Dendritic cell treated with granulocyte-macrophage colony-stimulating factor and Interleukin-4, amounts not matched to agents 40 ng/mL and 50 ng/mL, for 4 days (primary cell): ENCODE measurements at regions of chr17 and their contacts with region 1.

Region 1: DNA sequence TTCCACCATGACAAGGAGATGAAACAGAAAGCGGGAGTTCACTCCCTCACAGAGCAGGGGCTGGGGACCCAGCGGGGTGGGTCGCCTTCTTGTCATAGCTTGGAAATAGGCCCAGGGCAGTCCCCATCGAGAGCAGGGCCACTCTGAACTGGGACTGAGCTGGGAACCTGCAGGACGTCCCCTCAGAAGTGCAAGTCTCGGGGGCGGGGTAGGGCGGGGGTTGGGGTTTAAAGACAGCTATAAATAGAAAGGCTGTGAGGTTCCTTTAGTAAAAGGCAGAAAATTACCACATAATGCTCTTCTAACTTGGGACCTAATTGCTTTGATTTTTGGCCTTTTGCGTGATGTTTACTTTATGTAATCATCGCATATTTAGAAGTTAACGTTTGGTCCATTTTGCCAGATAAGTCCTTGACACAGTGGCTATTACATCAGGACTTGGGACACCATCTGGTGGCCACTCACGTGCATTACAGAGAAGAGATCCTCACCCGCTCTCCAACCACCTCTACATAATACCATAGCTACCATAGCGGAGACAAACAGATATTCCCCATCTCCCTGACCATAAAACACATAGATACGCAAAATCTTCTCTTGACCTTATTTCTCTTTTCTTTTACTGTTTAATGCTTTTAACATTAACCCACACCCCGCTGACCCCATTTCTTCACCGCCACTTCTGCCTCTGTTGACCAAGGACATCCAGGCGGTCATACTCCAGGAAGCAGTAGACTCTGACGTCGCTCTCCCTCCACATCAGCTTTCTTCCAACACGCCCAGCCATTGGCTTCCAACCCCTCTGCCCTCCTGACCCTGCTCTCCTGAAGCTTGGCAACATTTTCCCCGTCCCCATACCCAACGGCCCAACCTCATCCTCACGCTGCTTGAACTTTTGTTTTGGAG is 27.5 kb upstream of the PIK3R6 start:
- H3K4me3 Mint-ChIP-seq: no peak overlapping the region
- H3K27ac Mint-ChIP-seq: peak overlapping the region; percentile 63
- H3K4me1 Mint-ChIP-seq: peaks cover 78% of the 10 kb centered on the region
- H3K27me3 Mint-ChIP-seq: no peaks in the 10 kb centered on the region

Region 2: DNA sequence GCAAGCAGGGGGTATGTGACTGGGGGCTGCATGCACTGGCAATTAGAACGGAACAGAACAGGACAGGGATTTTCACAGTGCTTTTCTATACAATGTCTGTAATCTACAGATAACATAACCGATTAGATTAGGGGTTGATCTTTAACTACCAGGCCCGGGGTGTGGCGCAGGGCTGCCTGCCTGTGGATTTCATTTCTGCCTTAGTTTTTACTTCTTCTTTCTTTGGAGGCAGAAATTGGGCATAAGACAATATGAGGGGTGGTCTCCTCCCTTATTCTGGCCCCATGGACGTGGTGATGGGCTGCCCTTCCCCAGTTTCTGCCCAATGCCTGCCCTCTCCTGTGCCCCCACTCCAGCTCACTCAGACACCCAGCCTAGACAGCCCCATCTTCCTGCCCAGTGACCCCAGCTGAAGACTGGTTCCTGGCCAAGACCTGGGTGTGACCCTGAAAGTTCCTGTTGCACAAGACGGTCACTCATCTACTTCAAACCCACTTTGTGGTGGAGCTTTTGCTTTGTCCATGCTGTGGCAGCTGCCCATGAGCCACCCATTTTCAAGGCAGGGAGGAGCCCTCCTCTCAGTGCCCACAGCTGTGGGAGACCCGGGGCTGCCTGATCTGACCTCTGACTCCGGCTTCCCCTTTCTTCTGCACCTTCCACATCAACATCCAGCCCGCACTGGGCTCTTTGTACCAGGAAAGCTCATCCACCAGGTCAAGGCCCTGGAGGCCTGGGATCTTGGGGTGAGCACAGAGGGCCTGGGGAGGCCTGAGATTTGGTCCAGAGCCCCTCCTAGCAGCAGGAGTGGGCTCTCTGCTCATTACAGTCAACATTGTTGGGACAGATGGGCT is 826.0 kb before region 1 on chr17:
- intact Hi-C with region 1: no loop called
- H3K4me3 Mint-ChIP-seq: peak overlapping the region; percentile 21
- H3K27ac Mint-ChIP-seq: peak overlapping the region; percentile 91
- H3K4me1 Mint-ChIP-seq: peaks cover 75% of the 10 kb centered on the region
- H3K27me3 Mint-ChIP-seq: peaks cover 37% of the 10 kb centered on the region

Region 3: GRCh38 chr17:8806926-8807550 is 87.9 kb before region 1 on chr17:
- intact Hi-C with region 1: loop called (anchors 10 kb)
- H3K4me3 Mint-ChIP-seq: peak overlapping the region; percentile 52
- H3K27ac Mint-ChIP-seq: peak overlapping the region; percentile 93
- H3K4me1 Mint-ChIP-seq: peaks cover 34% of the 10 kb centered on the region
- H3K27me3 Mint-ChIP-seq: no peaks in the 10 kb centered on the region

Region 4: GRCh38 chr17:8846768-8847211 is 48.1 kb before region 1 on chr17:
- intact Hi-C with region 1: loop called (anchors 5 kb)
- H3K4me3 Mint-ChIP-seq: no peak overlapping the region
- H3K27ac Mint-ChIP-seq: no peak overlapping the region
- H3K4me1 Mint-ChIP-seq: peaks cover 24% of the 10 kb centered on the region
- H3K27me3 Mint-ChIP-seq: no peaks in the 10 kb centered on the region

Region 5: DNA sequence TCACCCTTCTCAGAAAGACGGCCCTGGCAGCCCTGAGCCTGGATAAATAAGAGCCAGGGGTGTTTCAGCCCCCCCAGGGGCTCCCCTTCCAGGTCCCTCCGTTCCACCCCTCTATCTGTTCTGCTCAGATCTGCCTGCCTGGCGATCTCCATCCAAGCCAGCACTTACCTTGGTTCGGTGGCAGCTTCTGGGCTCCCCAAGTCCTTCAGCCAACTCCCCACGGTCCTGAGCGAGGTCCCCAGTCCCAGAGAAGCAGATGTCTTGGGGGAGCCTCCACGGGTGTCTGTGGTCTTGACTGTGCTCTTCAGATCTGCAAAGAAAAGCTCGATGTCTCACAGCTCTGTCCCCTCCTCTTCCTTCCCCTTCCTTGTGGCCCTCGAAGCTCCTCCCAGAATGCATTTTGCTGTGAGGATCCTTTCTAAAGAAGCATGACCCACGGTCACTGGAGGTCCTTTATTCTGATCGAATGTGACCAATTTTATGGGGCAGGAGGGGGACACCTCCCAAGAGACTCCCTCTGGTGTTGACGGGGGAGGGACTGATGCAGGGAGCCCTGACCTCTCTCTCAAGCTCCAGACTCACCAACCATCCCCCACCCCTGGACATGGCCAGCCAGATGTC is 27.5 kb before region 1 on chr17 and contains the start of gene PIK3R6:
- intact Hi-C with region 1: no loop called
- H3K4me3 Mint-ChIP-seq: peak within 1 kb of the TSS; percentile 87
- H3K27ac Mint-ChIP-seq: peak within 1 kb of the TSS; percentile 80
- H3K4me1 Mint-ChIP-seq: peaks cover 81% of the 10 kb centered on the region
- H3K27me3 Mint-ChIP-seq: no peaks in the 10 kb centered on the region